Panc1 (cell line): ENCODE measurements at regions of chrX and their contacts with region 1.

Region 1: DNA sequence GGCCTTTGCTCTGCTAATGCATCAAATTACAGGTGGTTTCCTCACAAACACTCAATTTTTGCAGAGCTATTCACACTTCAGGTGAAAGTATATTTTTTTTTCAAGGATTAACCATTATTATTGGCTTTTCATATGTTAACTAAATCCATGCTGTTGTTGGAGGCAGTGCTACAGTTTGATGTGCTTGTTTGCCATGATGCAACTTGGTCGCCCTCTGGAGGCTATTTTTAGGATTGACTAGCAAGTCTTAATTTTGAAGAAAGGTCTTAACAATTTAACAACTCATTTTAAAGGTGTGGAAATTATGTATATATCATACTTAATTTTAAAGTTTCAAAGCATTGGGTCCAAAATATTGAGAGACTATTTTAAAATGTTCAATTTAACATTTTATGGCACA is 168.8 kb upstream of the FAM47A start:
- DNase-seq: peak; percentile 10
- ATAC-seq: no peak
- H3K4me3 ChIP-seq: no peak overlapping the region
- H3K27ac ChIP-seq: no peak overlapping the region
- H3K4me1 ChIP-seq: no peaks in the 10 kb centered on the region
- H3K27me3 ChIP-seq: no peaks in the 10 kb centered on the region
- CTCF ChIP-seq: peak; percentile 52; the same call in 1 of the 2 replicates

Region 2: GRCh38 chrX:33434256-33435092 is 866.4 kb before region 1 on chrX:
- CTCF ChIA-PET with region 1: interaction called, 3 read pairs
- POLR2A ChIA-PET with region 1: no interaction called
- in situ Hi-C with region 1: no loop called
- intact Hi-C with region 1: loop called (anchors 5 kb)
- DNase-seq: peak; percentile 27
- ATAC-seq: no peak
- H3K4me3 ChIP-seq: no peak overlapping the region
- H3K27ac ChIP-seq: no peak overlapping the region
- H3K4me1 ChIP-seq: no peaks in the 10 kb centered on the region
- H3K27me3 ChIP-seq: no peaks in the 10 kb centered on the region
- CTCF ChIP-seq: peak; percentile 76